B cell (primary cell): ENCODE measurements at regions of chr1 and their contacts with region 1.

Region 1: GRCh38 chr1:160499631-160500030 is 23.4 kb downstream of the SLAMF6 start:
- DNase-seq: no peak
- ATAC-seq: no peak
- H3K4me3 ChIP-seq: no peak overlapping the region
- H3K4me3 Mint-ChIP-seq: peak overlapping the region; percentile 26
- H3K27ac ChIP-seq: peak overlapping the region in 1 of 2 donors; percentile 56
- H3K27ac Mint-ChIP-seq: peak overlapping the region; percentile 68
- H3K4me1 ChIP-seq: peaks cover 43 to 53% of the 10 kb centered on the region in 2 donors
- H3K4me1 Mint-ChIP-seq: peaks cover 91% of the 10 kb centered on the region
- H3K27me3 ChIP-seq: no peaks in the 10 kb centered on the region
- H3K27me3 Mint-ChIP-seq: no peaks in the 10 kb centered on the region
- CTCF ChIP-seq: no peak

Region 2: GRCh38 chr1:160483505-160484185 is 16.0 kb before region 1 on chr1:
- CTCF ChIA-PET with region 1: interaction called, 13 read pairs
- POLR2A ChIA-PET with region 1: interaction called, 3 read pairs
- intact Hi-C with region 1: no loop called
- DNase-seq: no peak
- ATAC-seq: no peak
- H3K4me3 ChIP-seq: no peak overlapping the region
- H3K4me3 Mint-ChIP-seq: peak overlapping the region; percentile 15
- H3K27ac ChIP-seq: peak overlapping the region; percentile 35 to 50
- H3K27ac Mint-ChIP-seq: peak overlapping the region; percentile 89
- H3K4me1 ChIP-seq: peaks cover 70 to 73% of the 10 kb centered on the region in 2 donors
- H3K4me1 Mint-ChIP-seq: peaks cover 50% of the 10 kb centered on the region
- H3K27me3 ChIP-seq: no peaks in the 10 kb centered on the region
- H3K27me3 Mint-ChIP-seq: no peaks in the 10 kb centered on the region
- CTCF ChIP-seq: no peak

Region 3: DNA sequence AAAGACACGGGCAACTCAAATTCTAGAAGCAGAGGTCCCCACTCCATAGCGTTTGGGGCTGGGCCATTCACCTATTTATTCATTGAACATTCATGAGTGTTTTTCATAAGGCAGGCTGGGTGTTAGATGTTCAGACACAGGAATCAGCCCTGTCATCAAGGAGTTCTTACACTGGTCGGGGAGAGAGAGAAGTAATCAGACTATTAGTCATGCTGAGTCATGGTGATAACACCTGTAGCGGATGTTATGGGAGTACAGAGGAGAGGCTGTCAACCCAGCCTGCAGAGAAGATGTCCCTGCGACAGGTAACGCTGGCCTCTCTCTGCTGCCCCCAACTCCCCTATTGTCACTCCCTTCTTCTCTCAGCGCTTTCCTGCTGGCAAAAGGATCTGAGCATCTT is 313.6 kb after region 1 on chr1:
- CTCF ChIA-PET with region 1: no interaction called
- POLR2A ChIA-PET with region 1: no interaction called
- intact Hi-C with region 1: no loop called
- DNase-seq: peak; percentile 27
- ATAC-seq: no peak
- H3K4me3 ChIP-seq: no peak overlapping the region
- H3K4me3 Mint-ChIP-seq: no peak overlapping the region
- H3K27ac ChIP-seq: no peak overlapping the region
- H3K27ac Mint-ChIP-seq: no peak overlapping the region
- H3K4me1 ChIP-seq: no peaks in the 10 kb centered on the region
- H3K4me1 Mint-ChIP-seq: peaks cover 33% of the 10 kb centered on the region
- H3K27me3 ChIP-seq: no peaks in the 10 kb centered on the region
- H3K27me3 Mint-ChIP-seq: no peaks in the 10 kb centered on the region
- CTCF ChIP-seq: no peak